ENCODE measurements at regions of chr6 and their contacts with region 1.

Region 1: GRCh38 chr6:26204332-26205165 is 117.3 kb downstream of the HFE start:
- DNase-seq: peak; percentile 90
- H3K4me3 Mint-ChIP-seq: no peak overlapping the region
- H3K27ac Mint-ChIP-seq: no peak overlapping the region
- H3K4me1 Mint-ChIP-seq: peaks cover 35% of the 10 kb centered on the region
- H3K27me3 Mint-ChIP-seq: no peaks in the 10 kb centered on the region

Region 2: GRCh38 chr6:26175428-26176181 is 28.9 kb before region 1 on chr6:
- CTCF ChIA-PET with region 1: interaction called, 28 read pairs
- POLR2A ChIA-PET with region 1: interaction called, 330 read pairs
- DNase-seq: peak; percentile 68
- H3K4me3 Mint-ChIP-seq: peak overlapping the region; percentile 5
- H3K27ac Mint-ChIP-seq: peak overlapping the region; percentile 50
- H3K4me1 Mint-ChIP-seq: peaks cover 44% of the 10 kb centered on the region
- H3K27me3 Mint-ChIP-seq: no peaks in the 10 kb centered on the region

Region 3: DNA sequence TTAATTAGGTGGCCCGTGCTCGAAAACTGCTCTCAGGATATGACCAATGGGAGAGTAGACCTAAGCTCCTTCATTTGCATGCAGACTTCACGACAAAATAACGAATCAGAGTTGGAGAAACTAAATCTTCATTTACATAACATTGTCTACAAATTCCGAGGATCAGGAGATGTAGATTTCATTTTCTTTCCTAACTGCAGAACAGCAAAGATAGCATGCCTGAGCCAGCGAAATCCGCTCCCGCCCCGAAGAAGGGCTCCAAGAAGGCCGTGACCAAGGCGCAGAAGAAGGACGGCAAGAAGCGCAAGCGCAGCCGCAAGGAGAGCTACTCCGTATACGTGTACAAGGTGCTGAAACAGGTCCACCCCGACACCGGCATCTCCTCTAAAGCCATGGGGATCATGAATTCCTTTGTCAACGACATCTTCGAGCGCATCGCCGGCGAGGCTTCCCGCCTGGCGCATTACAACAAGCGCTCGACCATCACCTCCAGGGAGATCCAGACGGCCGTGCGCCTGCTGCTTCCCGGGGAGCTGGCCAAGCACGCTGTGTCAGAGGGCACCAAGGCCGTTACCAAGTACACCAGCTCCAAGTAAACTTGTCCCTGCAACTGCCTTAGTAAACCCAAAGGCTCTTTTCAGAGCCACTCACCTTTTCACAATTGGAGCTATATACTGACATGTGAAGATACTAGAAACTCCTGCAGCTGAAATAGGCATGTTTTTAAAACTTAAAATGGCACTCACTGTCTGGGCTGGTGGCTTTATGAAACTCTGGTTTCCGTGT is 20.8 kb before region 1 on chr6:
- CTCF ChIA-PET with region 1: interaction called, 42 read pairs
- POLR2A ChIA-PET with region 1: interaction called, 992 read pairs
- DNase-seq: peak; percentile 78
- H3K4me3 Mint-ChIP-seq: peak overlapping the region; percentile 75
- H3K27ac Mint-ChIP-seq: peak overlapping the region; percentile 92
- H3K4me1 Mint-ChIP-seq: peaks cover 71% of the 10 kb centered on the region
- H3K27me3 Mint-ChIP-seq: no peaks in the 10 kb centered on the region

Region 4: GRCh38 chr6:26299286-26300042 is 94.9 kb after region 1 on chr6:
- CTCF ChIA-PET with region 1: no interaction called
- POLR2A ChIA-PET with region 1: no interaction called
- DNase-seq: no peak
- H3K4me3 Mint-ChIP-seq: no peak overlapping the region
- H3K27ac Mint-ChIP-seq: no peak overlapping the region
- H3K4me1 Mint-ChIP-seq: peaks cover 22% of the 10 kb centered on the region
- H3K27me3 Mint-ChIP-seq: no peaks in the 10 kb centered on the region

Measured in activated CD4-positive, alpha-beta memory T cell treated with anti-CD3 and anti-CD28 coated beads, Interleukin-2, amount 10 ng/mL, durations not matched to agents 7 days and 5 days (primary cell).